Activated CD4-positive, alpha-beta T cell treated with anti-CD3 and anti-CD28 coated beads, Interleukin-2, amount 10 ng/mL, durations not matched to agents 7 days and 5 days (primary cell): ENCODE measurements at regions of chr5 and their contacts with region 1.

Region 1: GRCh38 chr5:54628050-54628449 is 110.5 kb downstream of the SNX18 start:
- DNase-seq: no peak
- H3K4me3 Mint-ChIP-seq: no peak overlapping the region
- H3K27ac Mint-ChIP-seq: no peak overlapping the region
- H3K4me1 Mint-ChIP-seq: no peaks in the 10 kb centered on the region
- H3K27me3 Mint-ChIP-seq: peaks cover 2% of the 10 kb centered on the region

Region 2: DNA sequence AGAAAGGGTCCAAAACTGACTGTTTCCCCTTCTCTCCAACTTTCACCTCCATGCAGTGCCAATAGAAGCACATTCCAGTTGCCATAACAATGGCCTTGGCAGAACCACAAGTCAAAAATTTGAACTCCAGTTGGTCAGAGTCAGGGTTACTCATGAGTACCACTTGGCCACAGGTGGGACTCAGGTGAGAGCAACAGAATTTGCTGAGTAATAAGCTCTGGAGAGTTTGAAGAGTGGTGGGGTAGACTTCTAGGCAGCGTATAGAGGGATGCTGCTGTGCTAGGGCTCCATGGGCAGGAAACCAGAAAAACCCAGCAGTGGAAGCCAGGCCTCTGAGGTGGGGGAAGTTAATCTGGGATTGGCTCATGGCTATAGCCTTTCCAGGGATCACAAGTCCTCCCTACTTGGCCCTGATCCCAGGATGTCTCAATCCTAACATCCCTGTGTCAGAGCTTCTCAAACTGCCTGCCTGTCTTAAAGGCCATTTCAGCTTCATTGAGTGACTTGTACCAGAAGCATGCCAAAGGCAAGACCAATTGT is 80.3 kb before region 1 on chr5:
- CTCF ChIA-PET with region 1: no interaction called
- POLR2A ChIA-PET with region 1: no interaction called
- DNase-seq: no peak
- H3K4me3 Mint-ChIP-seq: no peak overlapping the region
- H3K27ac Mint-ChIP-seq: no peak overlapping the region
- H3K4me1 Mint-ChIP-seq: no peaks in the 10 kb centered on the region
- H3K27me3 Mint-ChIP-seq: no peaks in the 10 kb centered on the region

Region 3: DNA sequence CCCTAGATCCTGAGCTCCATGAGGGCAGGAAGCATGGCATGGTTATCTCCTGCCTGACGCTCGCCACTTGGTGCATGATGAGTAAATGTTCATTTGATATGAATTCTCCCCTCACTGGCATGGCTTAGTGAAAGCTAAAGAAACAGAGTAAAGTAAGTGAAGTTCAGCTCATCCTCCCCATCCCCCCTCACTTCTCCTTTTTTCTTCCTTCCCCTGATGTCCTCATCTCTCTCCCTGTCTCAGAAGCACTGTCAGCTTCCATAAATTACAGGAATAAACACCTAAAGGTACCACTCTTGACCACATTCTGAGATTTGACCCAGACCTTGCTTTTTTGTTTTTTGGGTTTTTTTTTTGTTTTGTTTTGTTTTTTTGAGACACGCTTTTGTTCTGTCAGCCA is 37.2 kb before region 1 on chr5:
- CTCF ChIA-PET with region 1: no interaction called
- POLR2A ChIA-PET with region 1: no interaction called
- DNase-seq: no peak
- H3K4me3 Mint-ChIP-seq: no peak overlapping the region
- H3K27ac Mint-ChIP-seq: no peak overlapping the region
- H3K4me1 Mint-ChIP-seq: no peaks in the 10 kb centered on the region
- H3K27me3 Mint-ChIP-seq: no peaks in the 10 kb centered on the region

Region 4: GRCh38 chr5:54646356-54647101 is 18.5 kb after region 1 on chr5:
- CTCF ChIA-PET with region 1: interaction called, 10 read pairs
- POLR2A ChIA-PET with region 1: no interaction called
- DNase-seq: peak; percentile 85
- H3K4me3 Mint-ChIP-seq: peak overlapping the region; percentile 48
- H3K27ac Mint-ChIP-seq: peak overlapping the region; percentile 99
- H3K4me1 Mint-ChIP-seq: peaks cover 61% of the 10 kb centered on the region
- H3K27me3 Mint-ChIP-seq: no peaks in the 10 kb centered on the region